ENCODE measurements at regions of chr2 and their contacts with region 1.

Region 1: GRCh38 chr2:108988796-108989713 is at the start of gene EDAR:
- DNase-seq: peak; percentile 29 to 77 (median 50)
- ATAC-seq: peak; percentile 66
- H3K4me3 ChIP-seq: peak within 1 kb of the TSS; percentile 68
- H3K4me3 Mint-ChIP-seq: peak within 1 kb of the TSS; percentile 94
- H3K27ac ChIP-seq: peak within 1 kb of the TSS in 1 of 2 donors; percentile 62
- H3K27ac Mint-ChIP-seq: peak within 1 kb of the TSS; percentile 84
- H3K4me1 ChIP-seq: peaks cover 48% of the 10 kb centered on the region
- H3K4me1 Mint-ChIP-seq: peaks cover 74% of the 10 kb centered on the region
- H3K27me3 ChIP-seq: peaks cover 0 to 4% of the 10 kb centered on the region in 2 experiments
- H3K27me3 Mint-ChIP-seq: no peaks in the 10 kb centered on the region
- CTCF ChIP-seq: peak; percentile 74
- total RNA-seq, gene EDAR: 9.4 to 10.3 TPM

Region 2: GRCh38 chr2:108786354-108787199 is 202.5 kb before region 1 on chr2 and contains the start of gene CCDC138:
- CTCF ChIA-PET with region 1: interaction called, 4 read pairs
- POLR2A ChIA-PET with region 1: no interaction called
- intact Hi-C with region 1: loop called (anchors 10 kb)
- DNase-seq: peak; percentile 83 to 96 (median 90)
- ATAC-seq: peak; percentile 95
- H3K4me3 ChIP-seq: peak within 1 kb of the TSS; percentile 78
- H3K4me3 Mint-ChIP-seq: peak within 1 kb of the TSS; percentile 99
- H3K27ac ChIP-seq: peak within 1 kb of the TSS; percentile 33 to 63
- H3K27ac Mint-ChIP-seq: peak within 1 kb of the TSS; percentile 92
- H3K4me1 ChIP-seq: peaks cover 8% of the 10 kb centered on the region
- H3K4me1 Mint-ChIP-seq: peaks cover 22% of the 10 kb centered on the region
- H3K27me3 ChIP-seq: no peaks in the 10 kb centered on the region
- H3K27me3 Mint-ChIP-seq: no peaks in the 10 kb centered on the region
- CTCF ChIP-seq: no peak
- total RNA-seq, gene CCDC138: 4.7 to 5.8 TPM

Region 3: DNA sequence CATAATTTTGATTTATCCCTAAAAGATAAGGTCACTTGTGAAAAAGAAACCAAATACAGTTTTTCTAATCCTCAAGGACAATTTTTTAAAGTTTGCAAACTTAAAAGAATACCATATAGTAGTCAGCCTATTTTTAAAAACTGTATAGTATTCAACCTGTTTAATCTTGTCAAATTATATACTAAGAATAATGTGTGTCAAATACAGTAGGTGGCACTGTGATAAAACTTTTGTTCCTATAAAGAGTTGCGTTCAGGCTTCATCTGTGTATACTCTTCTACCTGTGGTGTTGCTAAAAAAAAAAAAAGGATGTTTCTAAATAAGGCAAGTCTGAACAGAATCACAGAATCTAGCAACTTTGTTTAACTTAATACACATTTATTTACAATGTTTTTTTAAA is 133.9 kb before region 1 on chr2:
- CTCF ChIA-PET with region 1: no interaction called
- POLR2A ChIA-PET with region 1: no interaction called
- intact Hi-C with region 1: loop called (anchors 1 to 2 kb)
- DNase-seq: peak in 3 of 14 experiments; percentile 50 to 54 (median 51)
- ATAC-seq: peak; percentile 82
- H3K4me3 ChIP-seq: no peak overlapping the region
- H3K4me3 Mint-ChIP-seq: no peak overlapping the region
- H3K27ac ChIP-seq: no peak overlapping the region
- H3K27ac Mint-ChIP-seq: no peak overlapping the region
- H3K4me1 ChIP-seq: no peaks in the 10 kb centered on the region
- H3K4me1 Mint-ChIP-seq: peaks cover 3% of the 10 kb centered on the region
- H3K27me3 ChIP-seq: no peaks in the 10 kb centered on the region
- H3K27me3 Mint-ChIP-seq: no peaks in the 10 kb centered on the region
- CTCF ChIP-seq: peak; percentile 64

Region 4: DNA sequence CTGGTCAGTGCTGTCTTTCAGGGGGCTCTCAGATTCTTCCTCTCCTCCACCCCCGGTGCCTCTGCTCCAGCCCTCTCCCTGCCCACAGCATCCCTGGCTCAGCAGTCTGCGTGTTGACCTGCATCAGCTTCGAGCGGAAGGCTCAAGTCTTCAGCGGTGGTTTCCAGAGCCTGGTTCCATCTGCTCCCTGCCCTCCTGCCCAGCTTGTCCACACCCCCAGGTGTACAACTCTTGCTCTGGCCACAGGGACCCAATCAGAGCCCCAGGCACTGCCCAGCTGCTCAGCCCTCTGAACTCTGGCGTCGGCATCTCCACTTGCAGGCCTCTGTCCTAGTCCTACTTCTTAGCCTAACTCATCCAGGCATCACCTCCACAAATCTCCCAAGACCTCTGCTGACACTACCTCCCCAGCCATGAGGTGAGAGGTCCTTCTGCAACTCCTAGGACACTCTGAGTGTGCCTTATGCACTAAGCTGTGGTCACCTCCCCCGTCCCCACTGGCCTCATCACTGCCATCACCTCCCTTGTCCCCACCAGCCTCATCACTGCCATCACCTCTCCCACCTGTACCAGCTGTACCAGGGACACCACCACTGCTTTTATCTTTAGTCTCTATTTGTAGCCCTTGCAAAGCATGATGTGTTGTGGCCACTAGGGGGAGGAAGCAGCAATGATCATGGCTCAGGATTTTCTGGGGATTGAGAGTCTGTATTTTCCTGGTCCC is 61.0 kb before region 1 on chr2:
- CTCF ChIA-PET with region 1: interaction called, 11 read pairs
- POLR2A ChIA-PET with region 1: interaction called, 4 read pairs
- intact Hi-C with region 1: loop called (anchors 1 kb)
- DNase-seq: peak in 13 of 14 experiments; percentile 8 to 72 (median 32)
- ATAC-seq: peak; percentile 73
- H3K4me3 ChIP-seq: no peak overlapping the region
- H3K4me3 Mint-ChIP-seq: no peak overlapping the region
- H3K27ac ChIP-seq: no peak overlapping the region
- H3K27ac Mint-ChIP-seq: no peak overlapping the region
- H3K4me1 ChIP-seq: peaks cover 6% of the 10 kb centered on the region
- H3K4me1 Mint-ChIP-seq: peaks cover 13% of the 10 kb centered on the region
- H3K27me3 ChIP-seq: no peaks in the 10 kb centered on the region
- H3K27me3 Mint-ChIP-seq: no peaks in the 10 kb centered on the region
- CTCF ChIP-seq: peak; percentile 82

Region 5: DNA sequence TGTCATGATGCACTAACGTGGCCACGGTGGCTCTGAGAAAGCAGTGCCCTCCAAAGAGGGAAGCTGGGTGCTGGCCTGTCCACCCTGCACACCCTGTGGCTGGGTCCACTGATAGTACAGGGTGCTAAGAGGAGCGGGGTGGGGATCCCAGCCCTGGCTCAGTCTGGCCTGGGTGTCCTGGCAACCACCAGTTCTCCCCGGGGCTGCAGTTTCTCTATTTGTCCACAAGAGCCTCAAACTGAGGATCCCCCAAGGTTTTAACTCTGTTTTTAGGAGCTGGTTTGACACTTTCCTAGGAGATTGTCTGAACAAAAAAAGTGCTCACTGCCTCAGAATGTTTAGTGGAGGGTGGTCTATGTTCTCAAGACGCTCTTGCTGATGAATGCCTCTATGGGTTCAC is 29.0 kb before region 1 on chr2:
- CTCF ChIA-PET with region 1: interaction called, 6 read pairs
- POLR2A ChIA-PET with region 1: interaction called, 8 read pairs
- intact Hi-C with region 1: loop called in 1 of 2 experiments (anchors 2 kb)
- DNase-seq: no peak
- ATAC-seq: no peak
- H3K4me3 ChIP-seq: no peak overlapping the region
- H3K4me3 Mint-ChIP-seq: peak overlapping the region; percentile 25
- H3K27ac ChIP-seq: no peak overlapping the region
- H3K27ac Mint-ChIP-seq: peak overlapping the region; percentile 90
- H3K4me1 ChIP-seq: peaks cover 63% of the 10 kb centered on the region
- H3K4me1 Mint-ChIP-seq: peaks cover 85% of the 10 kb centered on the region
- H3K27me3 ChIP-seq: no peaks in the 10 kb centered on the region
- H3K27me3 Mint-ChIP-seq: no peaks in the 10 kb centered on the region
- CTCF ChIP-seq: no peak

Region 6: DNA sequence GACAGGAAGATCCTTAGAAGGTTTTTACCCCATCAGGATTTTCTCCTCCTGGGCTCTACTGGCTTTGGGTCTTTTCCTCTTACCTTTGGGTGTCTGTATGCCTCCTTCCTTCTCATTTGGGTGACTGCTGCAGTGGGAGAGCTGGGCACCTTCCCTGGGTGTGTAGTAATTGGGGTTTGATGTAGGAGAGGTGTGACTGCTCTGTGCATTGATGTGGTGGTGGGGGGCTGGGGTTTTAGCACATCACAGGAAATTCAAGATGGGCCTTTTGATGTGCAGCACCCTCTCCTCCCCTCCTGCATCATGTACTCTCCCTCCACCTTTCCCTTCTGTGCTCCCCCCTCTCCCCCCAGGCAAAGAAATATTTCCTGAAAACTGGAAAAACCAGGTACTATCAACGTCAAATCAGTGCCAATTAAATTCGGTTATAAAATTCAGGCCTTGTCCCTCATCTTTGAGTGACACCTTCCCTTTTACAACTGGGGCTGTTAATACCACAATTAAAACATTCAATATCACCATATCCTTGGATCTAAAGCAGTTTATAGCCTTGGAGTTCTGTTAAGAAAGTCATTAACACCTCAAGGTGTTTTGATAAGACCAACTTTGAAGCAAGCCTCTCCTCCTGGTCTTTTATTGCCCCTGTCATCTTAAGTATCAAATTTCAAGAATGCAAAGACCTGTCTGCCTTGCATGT is 23.4 kb before region 1 on chr2:
- CTCF ChIA-PET with region 1: interaction called, 5 read pairs
- POLR2A ChIA-PET with region 1: interaction called, 3 read pairs
- intact Hi-C with region 1: loop called in 1 of 2 experiments (anchors 2 kb)
- DNase-seq: peak; percentile 17 to 73 (median 47)
- ATAC-seq: peak; percentile 85
- H3K4me3 ChIP-seq: peak overlapping the region; percentile 35
- H3K4me3 Mint-ChIP-seq: peak overlapping the region; percentile 76
- H3K27ac ChIP-seq: no peak overlapping the region
- H3K27ac Mint-ChIP-seq: peak overlapping the region; percentile 82
- H3K4me1 ChIP-seq: peaks cover 74% of the 10 kb centered on the region
- H3K4me1 Mint-ChIP-seq: peaks cover 95% of the 10 kb centered on the region
- H3K27me3 ChIP-seq: no peaks in the 10 kb centered on the region
- H3K27me3 Mint-ChIP-seq: no peaks in the 10 kb centered on the region
- CTCF ChIP-seq: no peak

Region 7: GRCh38 chr2:109062859-109063700 is 74.0 kb after region 1 on chr2:
- CTCF ChIA-PET with region 1: no interaction called
- POLR2A ChIA-PET with region 1: no interaction called
- intact Hi-C with region 1: loop called in 1 of 2 experiments (anchors 5 kb)
- DNase-seq: peak in 7 of 14 experiments; percentile 9 to 50 (median 25)
- ATAC-seq: peak; percentile 32
- H3K4me3 ChIP-seq: no peak overlapping the region
- H3K4me3 Mint-ChIP-seq: no peak overlapping the region
- H3K27ac ChIP-seq: no peak overlapping the region
- H3K27ac Mint-ChIP-seq: no peak overlapping the region
- H3K4me1 ChIP-seq: peaks cover 25% of the 10 kb centered on the region
- H3K4me1 Mint-ChIP-seq: peaks cover 47% of the 10 kb centered on the region
- H3K27me3 ChIP-seq: no peaks in the 10 kb centered on the region
- H3K27me3 Mint-ChIP-seq: no peaks in the 10 kb centered on the region
- CTCF ChIP-seq: no peak